Mammary epithelial cell (primary cell): ENCODE measurements at regions of chr2 and their contacts with region 1.

Region 1: DNA sequence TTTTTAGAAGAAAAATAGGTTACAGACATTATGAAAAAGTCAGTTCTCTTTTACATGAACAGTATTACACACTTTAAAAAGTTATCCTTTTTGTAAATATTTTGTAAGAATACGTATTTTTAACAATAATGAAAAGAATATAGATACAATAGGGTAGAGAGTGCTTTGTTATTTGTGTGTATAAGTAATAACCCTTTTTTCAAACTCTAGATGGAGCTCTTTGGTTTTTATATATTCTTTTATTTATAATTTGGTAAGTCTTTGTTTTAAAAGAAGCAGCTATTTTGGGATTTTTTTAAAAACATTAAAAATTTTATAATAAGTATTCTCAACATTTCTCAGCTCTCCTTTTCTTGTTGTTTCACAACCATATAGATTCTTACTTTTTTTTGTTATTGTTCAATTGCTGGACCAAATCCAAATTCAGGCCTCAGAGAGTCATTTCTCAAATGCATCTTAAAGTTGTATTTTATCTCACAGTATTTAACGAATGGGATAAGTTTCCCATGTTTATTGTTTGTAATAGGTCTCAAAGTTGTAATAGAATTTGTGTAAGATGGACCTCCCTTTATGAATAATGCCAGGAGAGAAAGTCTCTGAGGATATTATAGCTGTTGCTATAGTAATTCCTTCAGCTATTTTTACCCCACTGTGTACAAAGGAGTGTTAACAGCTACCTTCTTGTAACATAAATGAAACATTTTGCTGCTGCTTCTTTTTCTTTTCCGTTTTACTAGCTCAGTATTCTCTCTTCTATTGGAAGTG is 46.4 kb downstream of the ACYP2 start:
- DNase-seq: no peak
- H3K4me3 ChIP-seq: no peak overlapping the region
- H3K27ac ChIP-seq: no peak overlapping the region
- H3K4me1 ChIP-seq: no peaks in the 10 kb centered on the region
- H3K27me3 ChIP-seq: no peaks in the 10 kb centered on the region
- CTCF ChIP-seq: peak in 1 of 2 donors; percentile 13

Region 2: GRCh38 chr2:54503192-54503591 is 341.4 kb after region 1 on chr2:
- CTCF ChIA-PET with region 1: interaction called, 3 read pairs
- dilution Hi-C with region 1: no loop called
- in situ Hi-C with region 1: no loop called
- intact Hi-C with region 1: loop called (anchors 1 kb)
- DNase-seq: no peak
- H3K4me3 ChIP-seq: no peak overlapping the region
- H3K27ac ChIP-seq: no peak overlapping the region
- H3K4me1 ChIP-seq: no peaks in the 10 kb centered on the region
- H3K27me3 ChIP-seq: no peaks in the 10 kb centered on the region
- CTCF ChIP-seq: peak; percentile 53 to 76